K562 (cell line): ENCODE measurements at regions of chrX and their contacts with region 1.

Region 1: GRCh38 chrX:132044953-132045352 is 21.9 kb downstream of the STK26 start:
- DNase-seq: peak; percentile 12 to 69 (median 38)
- ATAC-seq: peak; percentile 93
- H3K4me3 ChIP-seq: no peak overlapping the region
- H3K27ac ChIP-seq: peak overlapping the region; percentile 48; the same call in 2 of the 3 replicates
- H3K4me1 ChIP-seq: peaks cover 0 to 20% of the 10 kb centered on the region in 2 experiments; a peak in 3 of 5 replicates
- H3K27me3 ChIP-seq: no peaks in the 10 kb centered on the region
- CTCF ChIP-seq: no peak
- EP300 ChIP-seq: peak; percentile 23; the same call in 1 of the 2 replicates
- POLR2A ChIP-seq: no peak
- RAD21 ChIP-seq: no peak

Region 2: GRCh38 chrX:132022967-132023895 is 21.7 kb before region 1 on chrX and contains the start of gene STK26:
- CTCF ChIA-PET with region 1: no interaction called
- POLR2A ChIA-PET with region 1: interaction called, 7 read pairs
- in situ Hi-C with region 1: no loop called
- intact Hi-C with region 1: loop called (anchors 2 kb)
- DNase-seq: peak; percentile 79 to 89 (median 82)
- ATAC-seq: peak; percentile 87
- H3K4me3 ChIP-seq: peak within 1 kb of the TSS; percentile 95
- H3K27ac ChIP-seq: peak within 1 kb of the TSS; percentile 89
- H3K4me1 ChIP-seq: peaks cover 9 to 17% of the 10 kb centered on the region in 2 experiments; a peak in 3 of 5 replicates
- H3K27me3 ChIP-seq: no peaks in the 10 kb centered on the region
- CTCF ChIP-seq: no peak
- EP300 ChIP-seq: no peak
- POLR2A ChIP-seq: peak; percentile 94
- RAD21 ChIP-seq: no peak
- polyA plus RNA-seq, gene STK26: 28.1 to 29.3 TPM